Upper lobe of right lung (tissue), 1 donor: ENCODE measurements at regions of chr12 and their contacts with region 1.

Region 1: GRCh38 chr12:94762259-94762942 is 112.0 kb upstream of the TMCC3 start:
- DNase-seq: no peak
- ATAC-seq: peak; percentile 41
- H3K4me3 ChIP-seq: no peak overlapping the region
- H3K27ac ChIP-seq: no peak overlapping the region
- H3K4me1 ChIP-seq: no peaks in the 10 kb centered on the region
- H3K27me3 ChIP-seq: no peaks in the 10 kb centered on the region
- CTCF ChIP-seq: no peak

Region 2: DNA sequence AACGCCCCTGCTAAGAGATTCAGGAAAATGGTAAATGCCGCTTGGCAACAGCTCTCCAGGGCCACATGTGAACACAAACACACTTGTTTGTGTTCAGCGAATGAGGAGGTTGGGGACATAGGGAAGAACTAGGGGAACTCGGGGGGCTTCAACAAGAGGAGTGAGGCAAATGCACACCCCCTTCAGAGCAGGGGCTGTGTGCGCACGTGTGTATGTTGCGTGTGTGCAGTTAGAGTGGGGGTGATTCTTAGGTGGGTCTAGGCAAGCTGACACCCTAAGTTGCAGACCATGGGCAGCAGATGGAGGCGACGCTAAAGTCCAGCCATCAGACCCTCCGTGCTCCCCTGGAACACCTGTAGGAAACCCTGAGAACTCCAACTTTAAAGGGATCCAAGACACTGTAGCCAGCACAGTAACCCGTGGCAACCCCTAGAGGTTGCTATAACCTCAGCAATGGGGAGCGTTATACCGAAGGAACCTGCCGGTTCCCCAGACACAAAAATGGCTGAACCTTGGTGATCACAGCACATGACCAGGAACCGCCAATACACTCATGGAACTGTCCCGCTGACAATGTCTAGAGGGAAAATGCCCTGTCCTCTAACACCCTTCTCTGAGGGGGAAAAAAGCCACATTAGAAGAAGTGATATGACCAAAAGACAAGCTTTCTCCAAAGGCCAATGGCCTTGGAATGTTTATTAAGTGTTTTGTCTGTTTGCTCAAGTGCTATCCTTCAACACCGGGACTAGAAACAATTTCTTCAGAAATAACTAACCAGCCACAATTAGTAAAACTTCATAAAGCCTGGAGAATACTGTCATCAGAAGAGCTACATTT is 216.2 kb before region 1 on chr12:
- intact Hi-C with region 1: loop called (anchors 10 kb)
- DNase-seq: no peak
- ATAC-seq: peak; percentile 95
- H3K4me3 ChIP-seq: no peak overlapping the region
- H3K27ac ChIP-seq: no peak overlapping the region
- H3K4me1 ChIP-seq: no peaks in the 10 kb centered on the region
- H3K27me3 ChIP-seq: no peaks in the 10 kb centered on the region
- CTCF ChIP-seq: peak; percentile 76